ENCODE measurements at regions of chr18 and their contacts with region 1.

Region 1: GRCh38 chr18:24014062-24014985 is at the start of gene TTC39C:
- DNase-seq: peak; percentile 66 to 87 (median 71)
- ATAC-seq: peak in 3 of 4 donors; percentile 78 to 92 (median 89)
- H3K4me3 ChIP-seq: peak within 1 kb of the TSS; percentile 67 to 99 (median 93)
- H3K27ac ChIP-seq: peak within 1 kb of the TSS; percentile 6 to 95 (median 76)
- H3K4me1 ChIP-seq: peaks cover 0 to 75% (median 6%) of the 10 kb centered on the region in 12 donors
- H3K27me3 ChIP-seq: no peaks in the 10 kb centered on the region
- CTCF ChIP-seq: no peak
- POLR2A ChIP-seq: no peak
- total RNA-seq, gene TTC39C: 2.7 to 12.8 (median 4.8) TPM

Region 2: DNA sequence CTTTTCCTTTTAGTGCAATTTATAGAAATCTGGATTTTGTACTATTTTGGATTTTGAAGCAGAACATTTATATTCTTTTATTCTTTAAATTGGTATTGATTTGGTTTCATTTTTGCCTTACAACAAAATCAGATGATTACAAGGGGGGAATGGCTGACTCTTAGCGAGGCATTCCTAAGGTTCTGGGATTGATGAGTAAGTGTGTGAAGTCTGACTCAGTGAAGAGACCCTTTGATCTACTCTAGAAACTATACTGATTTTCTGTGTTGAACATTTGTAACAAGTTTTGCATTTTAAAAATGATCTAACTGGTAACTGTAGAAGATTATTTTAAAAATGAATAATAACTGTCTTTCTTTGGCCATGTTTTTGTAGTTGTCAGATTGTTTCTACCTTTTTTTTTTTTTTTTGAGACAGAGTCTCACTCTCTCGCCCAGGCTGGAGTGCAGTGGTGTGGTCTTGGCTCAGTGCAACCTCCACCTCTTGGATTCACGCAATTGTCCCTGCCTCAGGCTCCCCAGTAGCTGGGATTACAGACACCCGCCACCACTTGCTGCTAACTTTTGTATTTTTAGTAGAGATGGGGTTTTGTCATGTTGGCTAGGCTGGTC is 48.9 kb after region 1 on chr18:
- intact Hi-C with region 1: loop called in 1 of 10 experiments (anchors 10 kb)
- DNase-seq: no peak
- ATAC-seq: no peak
- H3K4me3 ChIP-seq: no peak overlapping the region
- H3K27ac ChIP-seq: no peak overlapping the region
- H3K4me1 ChIP-seq: peaks cover 0 to 13% (median 0%) of the 10 kb centered on the region in 12 donors
- H3K27me3 ChIP-seq: no peaks in the 10 kb centered on the region
- CTCF ChIP-seq: no peak
- POLR2A ChIP-seq: no peak

Region 3: GRCh38 chr18:24075731-24076130 is 61.4 kb after region 1 on chr18:
- intact Hi-C with region 1: loop called in 2 of 10 experiments (anchors 10 kb)
- DNase-seq: no peak
- ATAC-seq: no peak
- H3K4me3 ChIP-seq: no peak overlapping the region
- H3K27ac ChIP-seq: peak overlapping the region; percentile 4 to 88 (median 70)
- H3K4me1 ChIP-seq: peaks cover 0 to 27% (median 15%) of the 10 kb centered on the region in 12 donors
- H3K27me3 ChIP-seq: no peaks in the 10 kb centered on the region
- CTCF ChIP-seq: no peak
- POLR2A ChIP-seq: no peak

Region 4: GRCh38 chr18:24089076-24089475 is 74.8 kb after region 1 on chr18:
- intact Hi-C with region 1: loop called in 1 of 10 experiments (anchors 10 kb)
- DNase-seq: peak in 1 of 5 donors; percentile 21
- ATAC-seq: peak; percentile 92 to 96 (median 94)
- H3K4me3 ChIP-seq: no peak overlapping the region
- H3K27ac ChIP-seq: peak overlapping the region; percentile 19 to 88 (median 63)
- H3K4me1 ChIP-seq: peaks cover 0 to 22% (median 18%) of the 10 kb centered on the region in 12 donors
- H3K27me3 ChIP-seq: no peaks in the 10 kb centered on the region
- CTCF ChIP-seq: no peak
- POLR2A ChIP-seq: no peak

Measured in heart left ventricle (tissue), 16 donors.